ENCODE measurements at regions of chr12 and their contacts with region 1.

Region 1: GRCh38 chr12:124680863-124681778 is 113.7 kb upstream of the NCOR2 start:
- DNase-seq: peak; percentile 83
- ATAC-seq: peak; percentile 71 to 75

Region 2: DNA sequence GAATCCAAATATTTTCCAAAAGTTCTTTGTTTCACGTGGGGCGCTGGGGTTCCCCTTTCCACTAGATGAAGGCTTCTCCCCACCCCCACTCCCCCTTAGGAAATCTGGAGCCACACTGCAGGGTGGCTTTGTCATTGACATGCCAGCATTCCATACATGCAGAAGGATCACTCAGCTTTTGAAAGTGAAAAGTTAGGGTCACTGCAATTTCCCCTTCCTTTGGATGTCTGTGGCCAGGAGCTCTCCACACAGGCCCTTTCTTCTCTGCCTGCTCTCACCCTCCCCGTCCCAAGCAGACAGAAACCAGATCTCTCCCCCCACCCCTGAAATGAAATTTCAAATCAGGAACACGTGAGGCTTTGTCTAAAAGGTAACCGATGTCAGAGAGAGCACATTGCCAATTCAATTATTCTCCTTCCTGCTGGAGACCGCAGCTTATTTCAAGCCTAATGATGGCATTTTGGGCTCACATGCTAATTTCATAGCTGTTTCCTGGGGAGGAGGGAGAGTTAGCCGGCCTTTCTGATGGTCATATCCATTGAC is 540.1 kb before region 1 on chr12:
- intact Hi-C with region 1: no loop called
- DNase-seq: no peak
- ATAC-seq: no peak

Region 3: GRCh38 chr12:124625867-124626675 is 55.0 kb before region 1 on chr12:
- intact Hi-C with region 1: loop called in 1 of 2 experiments (anchors 2 kb)
- DNase-seq: peak; percentile 94
- ATAC-seq: peak; percentile 87 to 93

Region 4: GRCh38 chr12:124745891-124746570 is 64.9 kb after region 1 on chr12:
- intact Hi-C with region 1: loop called in 1 of 2 experiments (anchors 10 kb)
- DNase-seq: peak; percentile 96
- ATAC-seq: peak; percentile 96 to 97

Region 5: DNA sequence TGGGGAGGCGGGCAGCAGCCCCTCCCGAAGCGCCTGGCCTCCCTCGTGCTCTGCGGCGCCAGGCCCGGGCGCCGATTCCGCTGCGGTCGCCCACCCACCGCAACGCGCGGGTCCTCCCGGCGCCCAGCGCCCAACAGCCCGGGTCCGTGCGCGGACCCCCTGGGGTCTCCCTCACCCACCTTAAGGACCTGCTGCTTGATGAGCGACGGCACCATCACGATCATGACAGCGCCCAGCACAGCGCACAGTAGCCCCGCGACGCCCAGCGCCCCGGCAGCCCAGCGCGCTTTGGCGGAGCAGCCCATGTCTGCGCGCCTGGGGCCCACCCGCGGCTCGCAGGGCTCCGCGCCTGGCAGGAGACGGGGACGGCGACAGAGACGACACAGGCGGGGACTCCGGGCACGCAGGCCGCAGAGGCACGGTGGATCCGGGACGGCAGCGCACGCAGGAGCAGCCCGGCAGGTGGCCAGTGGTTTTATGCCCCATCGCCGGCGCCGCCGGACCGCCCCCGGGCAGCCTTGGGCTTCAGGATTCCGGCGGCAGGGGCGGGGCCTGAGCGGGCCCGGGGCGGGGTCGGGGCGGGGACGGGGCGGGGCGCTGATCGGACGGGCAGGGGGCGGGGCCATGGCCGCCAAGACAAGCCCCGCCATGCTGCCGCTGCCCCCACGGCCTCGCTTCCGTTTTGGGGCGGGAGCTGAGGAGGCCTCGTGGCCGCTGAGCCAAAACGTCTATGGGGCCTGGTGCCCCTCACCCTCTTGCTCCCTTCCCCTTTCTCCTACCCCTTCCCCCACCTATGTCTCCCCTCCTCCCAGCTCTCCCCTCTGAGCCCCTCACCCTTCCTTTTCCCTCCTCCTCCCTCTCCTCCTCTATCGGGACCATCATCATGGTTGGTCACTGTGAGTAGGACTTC is 182.6 kb after region 1 on chr12 and contains the start of gene SCARB1:
- intact Hi-C with region 1: no loop called
- DNase-seq: peak; percentile 87
- ATAC-seq: peak; percentile 95 to 96
- total RNA-seq, gene SCARB1: 26.2 to 31.3 TPM

Measured in left cardiac atrium (tissue), 4 donors.